Aorta (tissue), 5 donors: ENCODE measurements at regions of chr11 and their contacts with region 1.

Region 1: GRCh38 chr11:5808500-5809121 is at the start of gene OR52N2:
- DNase-seq: peak; percentile 79 to 80
- ATAC-seq: peak; percentile 93
- H3K4me3 ChIP-seq: peak within 1 kb of the TSS in 1 of 2 donors; percentile 18
- H3K27ac ChIP-seq: no peak within 1 kb of the TSS
- H3K4me1 ChIP-seq: no peaks in the 10 kb centered on the region
- H3K27me3 ChIP-seq: no peaks in the 10 kb centered on the region
- total RNA-seq, gene OR52N2: not detected

Region 2: GRCh38 chr11:5123802-5124521 is 684.6 kb before region 1 on chr11:
- intact Hi-C with region 1: loop called in 1 of 2 experiments (anchors 10 kb)
- DNase-seq: peak; percentile 53 to 62
- ATAC-seq: peak; percentile 63
- H3K4me3 ChIP-seq: no peak overlapping the region
- H3K27ac ChIP-seq: no peak overlapping the region
- H3K4me1 ChIP-seq: no peaks in the 10 kb centered on the region
- H3K27me3 ChIP-seq: no peaks in the 10 kb centered on the region

Region 3: DNA sequence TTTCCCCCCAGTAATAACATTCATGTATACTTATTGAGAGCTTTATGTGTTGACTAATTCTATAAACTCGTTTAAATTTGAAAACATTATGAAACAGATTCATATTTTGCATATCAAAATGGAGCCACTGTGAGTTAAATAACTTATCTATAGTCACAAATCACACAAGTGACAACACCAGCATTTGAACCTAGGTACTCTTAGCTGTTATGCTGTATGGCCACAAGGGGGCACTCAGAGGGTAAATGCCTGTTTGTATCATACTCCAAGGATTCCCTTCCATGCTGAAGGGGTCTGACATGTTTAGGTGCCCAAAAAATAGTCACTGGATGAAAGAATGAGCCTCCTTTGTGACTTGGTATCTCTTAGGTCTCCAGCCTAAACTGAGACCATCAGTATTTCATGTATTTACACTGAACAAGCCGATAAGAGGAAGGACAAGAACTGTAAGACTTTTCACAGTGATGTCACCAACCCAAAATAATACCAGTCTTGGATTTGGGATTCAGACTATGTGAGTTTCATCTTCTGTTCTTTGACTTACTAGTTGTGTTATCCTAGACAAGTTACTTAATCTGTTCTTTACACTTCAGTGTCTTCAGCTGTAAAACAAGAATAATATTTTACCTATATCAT is 332.3 kb before region 1 on chr11:
- intact Hi-C with region 1: loop called (anchors 5 kb)
- DNase-seq: peak in 1 of 2 donors; percentile 53
- ATAC-seq: peak; percentile 73
- H3K4me3 ChIP-seq: no peak overlapping the region
- H3K27ac ChIP-seq: no peak overlapping the region
- H3K4me1 ChIP-seq: no peaks in the 10 kb centered on the region
- H3K27me3 ChIP-seq: no peaks in the 10 kb centered on the region

Region 4: DNA sequence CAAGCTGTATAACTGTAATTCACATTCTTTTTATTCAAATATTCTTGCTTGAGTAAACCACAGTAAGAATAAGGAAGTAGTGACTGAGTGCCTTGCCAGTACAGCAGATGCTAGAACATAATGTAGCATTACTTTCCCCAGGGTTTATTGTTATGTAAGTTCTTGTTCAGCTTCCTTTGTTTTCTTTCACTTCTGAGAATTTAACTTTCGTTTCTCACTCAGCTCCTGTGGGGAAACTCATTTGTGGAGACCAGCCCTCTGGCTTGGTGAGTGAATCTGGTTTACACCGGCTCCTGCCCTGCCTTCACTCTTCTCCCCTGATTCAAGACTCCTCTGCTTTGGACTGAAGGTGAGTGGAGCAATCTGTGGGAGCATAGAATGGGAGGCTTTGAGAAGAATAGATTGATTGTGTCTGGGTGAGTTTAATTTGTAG is 119.0 kb before region 1 on chr11 and contains the start of gene TRIM22:
- intact Hi-C with region 1: no loop called
- DNase-seq: peak in 1 of 2 donors; percentile 64
- ATAC-seq: peak; percentile 79
- H3K4me3 ChIP-seq: peak within 1 kb of the TSS; percentile 84
- H3K27ac ChIP-seq: peak within 1 kb of the TSS; percentile 94 to 98
- H3K4me1 ChIP-seq: peaks cover 0 to 4% of the 10 kb centered on the region in 2 donors
- H3K27me3 ChIP-seq: no peaks in the 10 kb centered on the region
- total RNA-seq, gene TRIM22: 71.4 to 109 TPM